ENCODE measurements at regions of chr2 and their contacts with region 1.

Region 1: DNA sequence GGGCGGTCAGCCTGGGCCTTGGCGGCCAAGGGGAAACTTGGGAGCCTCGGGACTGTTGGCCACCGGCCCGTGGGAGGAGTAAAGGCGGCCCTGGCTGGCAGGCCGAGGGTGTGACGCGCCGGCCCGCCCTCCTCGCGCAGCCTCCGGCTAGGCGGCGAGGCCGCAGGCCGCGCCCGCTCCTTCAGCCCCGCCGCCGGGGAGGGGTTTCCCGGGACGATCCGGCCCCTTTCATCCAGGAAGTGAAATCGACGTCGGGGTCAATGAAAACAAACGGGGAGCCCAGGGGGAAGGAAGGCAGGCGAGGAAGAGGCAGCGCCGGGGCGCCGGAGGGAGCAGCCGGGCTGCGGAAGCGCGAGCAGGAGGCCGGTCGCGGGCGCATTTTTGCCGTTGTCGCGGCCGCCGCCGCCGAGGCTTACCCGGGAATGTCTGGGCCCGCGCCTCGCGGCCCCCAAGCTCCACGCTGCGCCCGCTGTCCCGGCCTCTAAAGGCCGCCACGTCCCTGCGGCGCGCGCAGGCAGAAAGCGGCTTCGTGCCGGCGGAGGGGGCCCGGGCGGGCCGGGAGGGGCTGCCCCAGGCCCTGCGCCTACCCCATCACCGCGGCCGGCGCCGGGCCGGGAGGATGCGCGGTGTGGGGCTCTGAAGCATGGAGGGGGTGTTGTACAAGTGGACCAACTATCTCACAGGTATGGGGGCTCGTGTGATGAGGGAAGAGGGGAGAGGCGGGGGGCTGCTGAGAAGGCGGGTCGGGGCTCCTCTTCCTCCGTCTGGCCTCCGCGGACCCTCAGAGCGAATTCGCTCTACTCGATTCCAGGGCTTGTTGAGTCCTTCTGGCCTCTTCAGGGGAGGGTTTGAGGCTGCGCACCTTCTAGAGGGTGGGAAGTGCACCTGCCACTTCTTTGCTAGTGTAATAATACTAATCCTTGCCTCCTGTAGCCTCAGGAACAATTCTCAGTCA is at the start of gene PLEKHA3:
- DNase-seq: peak; percentile 78
- H3K4me3 Mint-ChIP-seq: peak within 1 kb of the TSS; percentile 97
- H3K27ac Mint-ChIP-seq: peak within 1 kb of the TSS; percentile 100
- H3K4me1 Mint-ChIP-seq: peaks cover 43% of the 10 kb centered on the region
- H3K27me3 Mint-ChIP-seq: no peaks in the 10 kb centered on the region
- total RNA-seq, gene PLEKHA3: 21.4 to 24.7 TPM

Region 2: GRCh38 chr2:178496049-178496448 is 15.5 kb after region 1 on chr2:
- CTCF ChIA-PET with region 1: interaction called, 17 read pairs
- POLR2A ChIA-PET with region 1: no interaction called
- DNase-seq: no peak
- H3K4me3 Mint-ChIP-seq: no peak overlapping the region
- H3K27ac Mint-ChIP-seq: no peak overlapping the region
- H3K4me1 Mint-ChIP-seq: peaks cover 13% of the 10 kb centered on the region
- H3K27me3 Mint-ChIP-seq: no peaks in the 10 kb centered on the region

Region 3: DNA sequence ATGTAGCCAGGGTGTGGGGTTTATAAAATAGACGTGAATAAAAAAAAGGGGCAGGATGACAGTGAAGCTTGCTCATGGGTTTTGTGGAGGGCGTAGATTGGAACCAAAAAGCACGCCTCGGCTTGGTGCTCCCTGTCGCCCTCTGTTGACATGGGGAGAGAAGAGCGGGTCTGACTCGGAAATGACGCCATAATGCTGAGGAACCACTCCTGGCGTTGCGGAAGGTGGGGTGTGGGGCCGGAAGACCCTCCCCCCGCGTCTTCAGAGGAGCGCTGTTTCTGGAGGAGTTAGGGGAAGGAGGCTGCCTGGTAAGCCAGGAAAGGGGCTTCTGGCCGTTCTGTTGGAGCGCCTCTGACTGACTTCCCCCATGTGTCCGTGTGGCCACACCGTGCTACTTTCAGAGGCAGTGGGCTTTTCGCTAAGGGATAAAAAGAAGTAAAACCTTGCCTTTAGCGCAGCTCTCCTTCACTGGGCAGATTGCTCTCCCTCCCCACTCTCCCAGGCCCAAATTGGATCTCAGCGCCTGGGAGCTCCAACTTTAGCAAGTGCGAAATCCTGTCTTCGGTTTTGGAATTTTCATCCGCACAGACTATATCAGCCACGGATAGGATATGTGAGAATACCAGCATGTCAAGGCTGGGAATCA is 42.6 kb after region 1 on chr2:
- CTCF ChIA-PET with region 1: interaction called, 14 read pairs
- POLR2A ChIA-PET with region 1: no interaction called
- DNase-seq: peak; percentile 87
- H3K4me3 Mint-ChIP-seq: peak overlapping the region; percentile 89
- H3K27ac Mint-ChIP-seq: peak overlapping the region; percentile 90
- H3K4me1 Mint-ChIP-seq: peaks cover 53% of the 10 kb centered on the region
- H3K27me3 Mint-ChIP-seq: no peaks in the 10 kb centered on the region